ENCODE measurements at regions of chr10 and their contacts with region 1.

Region 1: DNA sequence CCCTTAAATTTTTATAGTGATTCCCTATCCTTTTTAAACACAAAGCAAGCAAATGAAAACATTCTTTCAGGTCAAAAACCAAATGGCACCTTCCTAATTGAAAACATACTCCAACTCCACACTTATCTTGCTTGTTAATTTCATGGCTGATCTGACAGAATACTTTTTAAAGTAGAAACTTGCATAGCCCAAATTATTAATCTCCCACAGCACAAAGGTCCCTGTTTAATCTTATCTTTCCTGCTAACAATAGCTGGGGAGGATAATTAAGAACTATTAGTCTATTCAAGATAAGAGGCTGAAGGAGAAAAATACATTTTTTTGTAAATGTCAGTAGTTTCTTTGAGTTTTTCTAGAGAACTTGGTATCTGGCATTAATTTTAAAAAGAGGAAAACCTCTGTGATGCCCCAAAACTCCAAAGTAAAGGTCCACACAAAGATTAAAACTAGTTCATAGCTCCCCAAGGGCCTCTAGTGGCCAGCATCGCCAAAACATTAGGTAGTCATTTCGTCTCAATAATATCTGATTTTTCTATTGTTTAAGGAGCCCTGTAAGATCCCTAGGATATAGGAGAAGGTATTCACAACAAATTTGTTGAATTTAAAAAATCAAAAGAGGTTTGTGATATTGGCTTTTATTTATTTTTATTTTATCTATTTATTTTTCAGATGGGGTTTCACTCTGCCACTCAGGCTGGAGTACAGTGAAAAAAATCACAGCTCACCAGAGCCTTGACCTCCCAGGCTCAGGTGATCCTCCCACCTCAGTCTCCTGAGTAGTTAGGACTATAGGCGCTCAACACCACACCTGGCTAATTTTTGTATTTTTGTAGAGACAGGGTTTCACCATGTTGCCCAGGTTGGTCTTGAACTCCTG is 14.7 kb downstream of the CDNF start:
- DNase-seq: peak; percentile 12
- H3K4me3 ChIP-seq: no peak overlapping the region
- H3K27ac ChIP-seq: no peak overlapping the region
- H3K4me1 ChIP-seq: peaks cover 7% of the 10 kb centered on the region
- H3K27me3 ChIP-seq: no peaks in the 10 kb centered on the region
- CTCF ChIP-seq: peak; percentile 57 to 72

Region 2: DNA sequence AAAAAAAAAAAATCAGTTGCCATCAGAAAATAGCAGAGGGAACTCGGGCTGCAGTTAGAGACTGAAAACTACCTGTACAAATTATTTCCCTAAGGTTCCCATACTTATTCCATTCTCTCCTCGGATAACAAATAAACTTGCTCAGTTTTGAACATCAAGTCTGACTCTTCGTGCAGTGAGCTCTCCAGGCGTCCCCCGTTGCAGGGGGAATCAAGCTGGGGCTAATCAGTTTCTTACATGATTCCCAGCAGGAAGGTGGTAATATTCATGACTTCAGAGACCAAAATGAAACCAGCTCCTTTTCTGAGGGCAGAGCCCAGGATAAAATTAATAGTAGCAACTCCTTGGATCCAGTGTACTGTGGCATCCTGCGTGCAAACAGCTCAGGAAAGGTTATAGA is 627.7 kb before region 1 on chr10:
- CTCF ChIA-PET with region 1: no interaction called
- dilution Hi-C with region 1: no loop called
- in situ Hi-C with region 1: no loop called
- intact Hi-C with region 1: loop called (anchors 2 kb)
- DNase-seq: no peak
- H3K4me3 ChIP-seq: no peak overlapping the region
- H3K27ac ChIP-seq: no peak overlapping the region
- H3K4me1 ChIP-seq: no peaks in the 10 kb centered on the region
- H3K27me3 ChIP-seq: peaks cover 2% of the 10 kb centered on the region
- CTCF ChIP-seq: no peak

Region 3: DNA sequence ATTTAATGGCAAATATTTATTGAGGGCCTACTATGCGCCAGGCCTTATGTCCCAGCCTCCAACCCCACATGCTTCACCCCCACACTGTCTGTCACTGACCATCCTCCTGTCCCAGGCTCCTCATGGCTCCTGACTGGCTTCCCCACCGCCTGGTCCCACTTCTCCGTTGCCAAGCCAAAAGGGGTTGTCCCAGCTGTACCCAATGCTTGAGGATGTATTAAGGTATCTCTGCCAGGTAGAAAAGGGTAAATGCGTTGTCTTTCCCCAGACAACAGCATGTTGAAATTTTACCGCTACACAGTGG is 323.6 kb before region 1 on chr10:
- CTCF ChIA-PET with region 1: no interaction called
- dilution Hi-C with region 1: no loop called
- in situ Hi-C with region 1: no loop called
- intact Hi-C with region 1: loop called (anchors 1 kb)
- DNase-seq: no peak
- H3K4me3 ChIP-seq: no peak overlapping the region
- H3K27ac ChIP-seq: no peak overlapping the region
- H3K4me1 ChIP-seq: no peaks in the 10 kb centered on the region
- H3K27me3 ChIP-seq: no peaks in the 10 kb centered on the region
- CTCF ChIP-seq: no peak

Region 4: DNA sequence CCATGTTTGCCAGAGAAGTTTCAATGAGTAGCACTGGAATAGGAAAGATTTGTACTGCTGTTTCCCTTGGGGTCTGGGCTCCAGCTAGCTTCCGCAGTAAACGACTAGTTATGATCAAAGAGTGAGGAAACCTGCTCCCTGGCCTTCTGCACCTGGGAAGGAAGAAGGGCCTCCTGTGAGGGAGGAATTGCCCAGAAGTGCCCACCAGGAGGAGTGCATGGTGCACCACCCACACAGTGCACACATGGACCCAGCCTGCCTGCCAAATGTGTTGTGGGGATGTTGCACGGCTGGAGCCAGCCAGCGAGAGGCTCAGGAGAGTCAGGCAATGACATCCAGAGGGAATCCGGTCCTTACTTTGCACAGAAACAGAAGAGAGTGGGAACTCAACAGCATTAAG is 21.4 kb before region 1 on chr10:
- CTCF ChIA-PET with region 1: no interaction called
- dilution Hi-C with region 1: no loop called
- in situ Hi-C with region 1: no loop called
- intact Hi-C with region 1: no loop called
- DNase-seq: no peak
- H3K4me3 ChIP-seq: no peak overlapping the region
- H3K27ac ChIP-seq: no peak overlapping the region
- H3K4me1 ChIP-seq: no peaks in the 10 kb centered on the region
- H3K27me3 ChIP-seq: peaks cover 2% of the 10 kb centered on the region
- CTCF ChIP-seq: no peak

Region 5: DNA sequence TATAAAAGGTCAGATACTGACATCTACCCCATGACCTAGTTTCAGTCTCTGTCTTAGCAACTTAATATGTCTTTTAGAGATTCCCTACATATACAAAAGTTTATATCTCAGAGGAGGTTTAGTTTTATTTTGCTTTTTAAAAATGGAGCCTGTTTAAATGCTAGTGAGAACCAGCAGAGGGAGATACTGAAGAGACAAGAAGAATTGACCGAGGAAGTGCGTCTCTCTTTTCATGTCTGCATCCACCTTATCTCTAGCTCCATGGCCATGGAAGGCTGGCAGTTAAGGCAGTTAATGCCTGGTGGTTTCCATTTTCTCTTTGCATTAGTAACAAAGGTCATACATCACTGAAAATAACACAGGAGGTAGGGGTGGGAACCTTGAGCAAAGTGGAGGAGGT is 66.2 kb after region 1 on chr10:
- CTCF ChIA-PET with region 1: no interaction called
- dilution Hi-C with region 1: no loop called
- in situ Hi-C with region 1: no loop called
- intact Hi-C with region 1: no loop called
- DNase-seq: no peak
- H3K4me3 ChIP-seq: no peak overlapping the region
- H3K27ac ChIP-seq: no peak overlapping the region
- H3K4me1 ChIP-seq: peaks cover 7% of the 10 kb centered on the region
- H3K27me3 ChIP-seq: no peaks in the 10 kb centered on the region
- CTCF ChIP-seq: peak in 1 of 2 donors; percentile 30

Region 6: GRCh38 chr10:14959276-14960057 is 136.3 kb after region 1 on chr10 and contains the start of gene MEIG1:
- CTCF ChIA-PET with region 1: no interaction called
- dilution Hi-C with region 1: no loop called
- in situ Hi-C with region 1: no loop called
- intact Hi-C with region 1: no loop called
- DNase-seq: peak; percentile 91
- H3K4me3 ChIP-seq: peak within 1 kb of the TSS; percentile 70 to 87 (median 73)
- H3K27ac ChIP-seq: peak within 1 kb of the TSS; percentile 89
- H3K4me1 ChIP-seq: peaks cover 12% of the 10 kb centered on the region
- H3K27me3 ChIP-seq: no peaks in the 10 kb centered on the region
- CTCF ChIP-seq: no peak
- total RNA-seq, gene MEIG1: 0.68 TPM in 1 of 2 donors, not detected in the other

Measured in mammary epithelial cell (primary cell).